Transverse colon (tissue), 4 donors: ENCODE measurements at regions of chr16 and their contacts with region 1.

Region 1: GRCh38 chr16:56317998-56318826 is 107.1 kb downstream of the AMFR start:
- DNase-seq: peak; percentile 80
- H3K4me3 ChIP-seq: peak overlapping the region in 1 of 4 donors; percentile 21
- H3K27ac ChIP-seq: peak overlapping the region in 1 of 4 donors; percentile 26
- H3K4me1 ChIP-seq: peaks cover 0 to 10% (median 3%) of the 10 kb centered on the region in 4 donors
- H3K27me3 ChIP-seq: no peaks in the 10 kb centered on the region
- CTCF ChIP-seq: peak; percentile 91 to 94 (median 93)
- EP300 ChIP-seq: no peak
- POLR2A ChIP-seq: no peak

Region 2: GRCh38 chr16:55944377-55944802 is 373.8 kb before region 1 on chr16:
- in situ Hi-C with region 1: loop called (anchors 5 to 10 kb)
- intact Hi-C with region 1: loop called (anchors 1 kb)
- DNase-seq: peak; percentile 61
- H3K4me3 ChIP-seq: no peak overlapping the region
- H3K27ac ChIP-seq: peak overlapping the region in 3 of 4 donors; percentile 40 to 50 (median 41)
- H3K4me1 ChIP-seq: peaks cover 0 to 2% (median 0%) of the 10 kb centered on the region in 4 donors
- H3K27me3 ChIP-seq: no peaks in the 10 kb centered on the region
- CTCF ChIP-seq: peak; percentile 73 to 93 (median 91)
- EP300 ChIP-seq: no peak
- POLR2A ChIP-seq: no peak

Region 3: GRCh38 chr16:55949518-55949917 is 368.7 kb before region 1 on chr16:
- in situ Hi-C with region 1: loop called (anchors 5 to 10 kb)
- intact Hi-C with region 1: loop called (anchors 1 kb)
- DNase-seq: no peak
- H3K4me3 ChIP-seq: no peak overlapping the region
- H3K27ac ChIP-seq: no peak overlapping the region
- H3K4me1 ChIP-seq: peaks cover 0 to 1% (median 0%) of the 10 kb centered on the region in 4 donors
- H3K27me3 ChIP-seq: no peaks in the 10 kb centered on the region
- CTCF ChIP-seq: no peak
- EP300 ChIP-seq: no peak
- POLR2A ChIP-seq: no peak

Region 4: DNA sequence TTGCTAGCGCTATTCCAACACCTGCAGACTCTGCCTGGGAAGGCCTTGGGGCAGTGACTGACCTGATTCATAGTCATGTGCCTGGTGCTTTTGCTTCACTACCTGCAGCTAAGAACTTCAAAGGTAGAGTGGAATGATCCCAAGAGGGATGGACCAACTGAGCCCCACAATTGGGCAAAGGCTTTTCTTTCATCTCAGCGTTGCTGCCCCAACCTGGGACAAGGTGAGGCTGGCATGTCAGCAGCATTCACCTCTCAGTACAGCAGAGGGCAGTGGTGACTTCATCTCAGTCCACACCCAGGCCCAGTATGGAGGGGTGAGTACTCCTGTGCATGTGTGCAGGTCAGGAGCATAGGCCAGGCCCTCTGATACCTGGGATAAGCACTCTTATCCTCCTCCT is 276.5 kb before region 1 on chr16:
- in situ Hi-C with region 1: loop called in 2 of 4 experiments (anchors 10 to 25 kb)
- intact Hi-C with region 1: loop called (anchors 10 kb)
- DNase-seq: peak; percentile 14
- H3K4me3 ChIP-seq: no peak overlapping the region
- H3K27ac ChIP-seq: no peak overlapping the region
- H3K4me1 ChIP-seq: no peaks in the 10 kb centered on the region
- H3K27me3 ChIP-seq: no peaks in the 10 kb centered on the region
- CTCF ChIP-seq: peak in 4 of 5 experiments; percentile 7 to 15 (median 12)
- EP300 ChIP-seq: no peak
- POLR2A ChIP-seq: no peak

Region 5: DNA sequence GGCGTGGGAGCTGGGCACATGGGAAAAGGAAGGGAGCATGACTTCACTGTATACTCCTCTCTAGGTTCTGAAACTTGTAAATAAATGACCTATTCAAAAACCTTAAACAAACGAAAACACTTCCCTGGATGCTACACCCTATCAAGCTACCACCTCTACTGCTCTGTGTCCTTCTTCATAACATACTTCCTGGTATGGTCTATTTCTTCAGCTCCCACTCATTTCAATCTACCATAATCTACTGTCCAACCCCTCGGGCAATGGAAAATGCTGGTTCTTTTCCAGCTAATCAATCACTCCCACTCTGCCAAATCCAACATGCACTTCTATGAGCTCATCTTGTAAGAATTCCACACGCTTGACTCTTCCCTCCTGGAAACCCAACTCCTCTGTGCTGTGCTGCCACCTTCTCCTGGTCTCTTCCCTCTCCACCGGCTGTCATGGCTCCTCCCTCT is 64.7 kb after region 1 on chr16:
- in situ Hi-C with region 1: no loop called
- intact Hi-C with region 1: no loop called
- DNase-seq: no peak
- H3K4me3 ChIP-seq: no peak overlapping the region
- H3K27ac ChIP-seq: no peak overlapping the region
- H3K4me1 ChIP-seq: no peaks in the 10 kb centered on the region
- H3K27me3 ChIP-seq: no peaks in the 10 kb centered on the region
- CTCF ChIP-seq: no peak
- EP300 ChIP-seq: no peak
- POLR2A ChIP-seq: no peak